ENCODE measurements at regions of chr18 and their contacts with region 1.

Region 1: GRCh38 chr18:27845897-27846296 is 331.0 kb downstream of the CDH2 start:
- DNase-seq: no peak
- H3K4me3 ChIP-seq: no peak overlapping the region
- H3K4me3 Mint-ChIP-seq: no peak overlapping the region
- H3K27ac Mint-ChIP-seq: no peak overlapping the region
- H3K4me1 ChIP-seq: peaks cover 12% of the 10 kb centered on the region; the same call in 1 of the 2 replicates
- H3K4me1 Mint-ChIP-seq: peaks cover 14% of the 10 kb centered on the region
- H3K27me3 ChIP-seq: no peaks in the 10 kb centered on the region
- H3K27me3 Mint-ChIP-seq: no peaks in the 10 kb centered on the region
- CTCF ChIP-seq: no peak

Region 2: DNA sequence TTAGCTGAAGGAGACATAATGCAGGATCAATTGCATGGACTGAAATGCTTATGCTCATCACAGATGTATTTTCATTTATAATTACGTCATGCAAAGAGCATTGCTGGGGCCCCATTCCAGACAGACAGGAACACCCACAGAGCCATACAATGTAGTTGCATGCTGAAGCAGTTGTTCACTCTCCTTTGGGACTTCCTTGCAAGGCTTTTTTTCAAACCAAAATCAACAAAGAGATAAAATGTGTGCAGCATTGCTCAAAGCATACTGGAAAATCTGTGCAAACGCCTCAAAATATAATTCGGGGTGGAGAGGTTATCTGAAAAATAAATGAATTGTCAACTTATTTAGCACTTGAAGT is 132.2 kb before region 1 on chr18:
- CTCF ChIA-PET with region 1: no interaction called
- POLR2A ChIA-PET with region 1: no interaction called
- intact Hi-C with region 1: no loop called
- DNase-seq: no peak
- H3K4me3 ChIP-seq: no peak overlapping the region
- H3K4me3 Mint-ChIP-seq: no peak overlapping the region
- H3K27ac Mint-ChIP-seq: no peak overlapping the region
- H3K4me1 ChIP-seq: no peaks in the 10 kb centered on the region
- H3K4me1 Mint-ChIP-seq: no peaks in the 10 kb centered on the region
- H3K27me3 ChIP-seq: no peaks in the 10 kb centered on the region
- H3K27me3 Mint-ChIP-seq: no peaks in the 10 kb centered on the region
- CTCF ChIP-seq: no peak

Region 3: GRCh38 chr18:27785815-27786471 is 60.0 kb before region 1 on chr18:
- CTCF ChIA-PET with region 1: no interaction called
- POLR2A ChIA-PET with region 1: no interaction called
- intact Hi-C with region 1: no loop called
- DNase-seq: no peak
- H3K4me3 ChIP-seq: no peak overlapping the region
- H3K4me3 Mint-ChIP-seq: no peak overlapping the region
- H3K27ac Mint-ChIP-seq: no peak overlapping the region
- H3K4me1 ChIP-seq: no peaks in the 10 kb centered on the region
- H3K4me1 Mint-ChIP-seq: no peaks in the 10 kb centered on the region
- H3K27me3 ChIP-seq: no peaks in the 10 kb centered on the region
- H3K27me3 Mint-ChIP-seq: no peaks in the 10 kb centered on the region
- CTCF ChIP-seq: no peak

Region 4: GRCh38 chr18:27871726-27872125 is 25.8 kb after region 1 on chr18:
- CTCF ChIA-PET with region 1: no interaction called
- POLR2A ChIA-PET with region 1: no interaction called
- intact Hi-C with region 1: loop called (anchors 1 kb)
- DNase-seq: no peak
- H3K4me3 ChIP-seq: no peak overlapping the region
- H3K4me3 Mint-ChIP-seq: no peak overlapping the region
- H3K27ac Mint-ChIP-seq: no peak overlapping the region
- H3K4me1 ChIP-seq: no peaks in the 10 kb centered on the region
- H3K4me1 Mint-ChIP-seq: no peaks in the 10 kb centered on the region
- H3K27me3 ChIP-seq: no peaks in the 10 kb centered on the region
- H3K27me3 Mint-ChIP-seq: no peaks in the 10 kb centered on the region
- CTCF ChIP-seq: no peak

Measured in Caco-2 (cell line).